H1 (cell line): ENCODE measurements at regions of chr6 and their contacts with region 1.

Region 1: DNA sequence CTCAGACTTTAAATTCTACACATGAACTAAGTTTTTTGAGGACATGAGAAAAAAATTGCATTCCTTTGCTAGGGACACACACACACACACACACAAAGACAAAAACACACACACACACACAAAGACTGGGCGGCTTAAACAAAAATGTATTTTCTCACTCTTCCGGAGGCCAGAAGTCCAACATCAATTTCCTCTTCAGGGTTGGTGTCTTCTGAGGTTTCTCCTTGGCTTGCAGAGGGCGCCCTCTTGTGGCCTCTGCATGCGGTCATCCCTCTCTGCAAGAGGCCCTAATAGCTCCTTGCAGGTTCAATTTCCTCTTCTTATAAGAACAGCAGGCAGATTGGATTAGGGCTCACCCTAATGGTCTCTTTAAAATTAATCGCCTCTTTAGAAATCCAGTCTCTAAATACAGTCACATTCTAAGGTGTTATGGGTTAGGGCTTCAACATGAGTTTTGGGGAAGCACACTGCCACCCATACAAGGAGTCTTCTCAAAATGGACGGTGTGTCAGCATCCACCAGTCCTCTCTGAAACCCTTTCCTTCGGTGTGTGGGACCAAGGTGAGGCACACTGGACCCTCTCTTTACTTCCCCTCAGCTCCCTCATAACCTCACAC is 61.4 kb downstream of the GPR6 start:
- DNase-seq: peak; percentile 84 to 86
- H3K4me3 ChIP-seq: peak overlapping the region; percentile 13 to 44 (median 26); a peak in 6 of 8 replicates
- H3K27ac ChIP-seq: no peak overlapping the region
- H3K4me1 ChIP-seq: peaks cover 0 to 3% (median 3%) of the 10 kb centered on the region in 4 experiments; a peak in 5 of 7 replicates
- H3K27me3 ChIP-seq: no peaks in the 10 kb centered on the region
- CTCF ChIP-seq: peak; percentile 79 to 94 (median 86)
- EP300 ChIP-seq: no peak
- POLR2A ChIP-seq: no peak
- RAD21 ChIP-seq: peak; percentile 94 to 96

Region 2: GRCh38 chr6:109595998-109596397 is 443.5 kb before region 1 on chr6:
- CTCF ChIA-PET with region 1: interaction called, 10 read pairs
- POLR2A ChIA-PET with region 1: no interaction called
- DNase-seq: peak in 1 of 2 experiments; percentile 49
- H3K4me3 ChIP-seq: no peak overlapping the region
- H3K27ac ChIP-seq: no peak overlapping the region
- H3K4me1 ChIP-seq: no peaks in the 10 kb centered on the region
- H3K27me3 ChIP-seq: no peaks in the 10 kb centered on the region
- CTCF ChIP-seq: peak in 2 of 3 experiments; percentile 59 to 62; a peak in 3 of 4 replicates
- EP300 ChIP-seq: no peak
- POLR2A ChIP-seq: no peak
- RAD21 ChIP-seq: peak; percentile 80 to 82

Region 3: GRCh38 chr6:109762769-109763441 is 276.6 kb before region 1 on chr6:
- CTCF ChIA-PET with region 1: interaction called, 11 read pairs
- POLR2A ChIA-PET with region 1: no interaction called
- DNase-seq: no peak
- H3K4me3 ChIP-seq: no peak overlapping the region
- H3K27ac ChIP-seq: no peak overlapping the region
- H3K4me1 ChIP-seq: no peaks in the 10 kb centered on the region
- H3K27me3 ChIP-seq: no peaks in the 10 kb centered on the region
- CTCF ChIP-seq: no peak
- EP300 ChIP-seq: no peak
- POLR2A ChIP-seq: no peak
- RAD21 ChIP-seq: no peak

Region 4: GRCh38 chr6:109854541-109855308 is 184.7 kb before region 1 on chr6:
- CTCF ChIA-PET with region 1: interaction called, 11 read pairs
- POLR2A ChIA-PET with region 1: no interaction called
- DNase-seq: peak in 1 of 2 experiments; percentile 15
- H3K4me3 ChIP-seq: no peak overlapping the region
- H3K27ac ChIP-seq: no peak overlapping the region
- H3K4me1 ChIP-seq: peaks cover 0 to 6% (median 2%) of the 10 kb centered on the region in 4 experiments; a peak in 2 of 7 replicates
- H3K27me3 ChIP-seq: no peaks in the 10 kb centered on the region
- CTCF ChIP-seq: no peak
- EP300 ChIP-seq: no peak
- POLR2A ChIP-seq: no peak
- RAD21 ChIP-seq: no peak

Region 5: GRCh38 chr6:109949281-109950065 is 90.0 kb before region 1 on chr6:
- CTCF ChIA-PET with region 1: interaction called, 13 read pairs
- POLR2A ChIA-PET with region 1: no interaction called
- DNase-seq: no peak
- H3K4me3 ChIP-seq: no peak overlapping the region
- H3K27ac ChIP-seq: no peak overlapping the region
- H3K4me1 ChIP-seq: peaks cover 4 to 14% (median 8%) of the 10 kb centered on the region in 4 experiments; a peak in 5 of 7 replicates
- H3K27me3 ChIP-seq: no peaks in the 10 kb centered on the region
- CTCF ChIP-seq: no peak
- EP300 ChIP-seq: no peak
- POLR2A ChIP-seq: no peak
- RAD21 ChIP-seq: no peak

Region 6: GRCh38 chr6:110029144-110029543 is 10.3 kb before region 1 on chr6:
- CTCF ChIA-PET with region 1: interaction called, 18 read pairs
- POLR2A ChIA-PET with region 1: no interaction called
- DNase-seq: no peak
- H3K4me3 ChIP-seq: no peak overlapping the region
- H3K27ac ChIP-seq: no peak overlapping the region
- H3K4me1 ChIP-seq: no peaks in the 10 kb centered on the region
- H3K27me3 ChIP-seq: no peaks in the 10 kb centered on the region; a peak in 1 of 7 replicates
- CTCF ChIP-seq: no peak
- EP300 ChIP-seq: no peak
- POLR2A ChIP-seq: no peak
- RAD21 ChIP-seq: no peak